ENCODE measurements at regions of chr9 and their contacts with region 1.

Region 1: GRCh38 chr9:121984726-121985402 is 108.2 kb downstream of the TTLL11 start:
- DNase-seq: no peak
- H3K4me3 ChIP-seq: no peak overlapping the region
- H3K27ac ChIP-seq: no peak overlapping the region
- H3K4me1 ChIP-seq: no peaks in the 10 kb centered on the region
- H3K27me3 ChIP-seq: no peaks in the 10 kb centered on the region
- CTCF ChIP-seq: no peak

Region 2: DNA sequence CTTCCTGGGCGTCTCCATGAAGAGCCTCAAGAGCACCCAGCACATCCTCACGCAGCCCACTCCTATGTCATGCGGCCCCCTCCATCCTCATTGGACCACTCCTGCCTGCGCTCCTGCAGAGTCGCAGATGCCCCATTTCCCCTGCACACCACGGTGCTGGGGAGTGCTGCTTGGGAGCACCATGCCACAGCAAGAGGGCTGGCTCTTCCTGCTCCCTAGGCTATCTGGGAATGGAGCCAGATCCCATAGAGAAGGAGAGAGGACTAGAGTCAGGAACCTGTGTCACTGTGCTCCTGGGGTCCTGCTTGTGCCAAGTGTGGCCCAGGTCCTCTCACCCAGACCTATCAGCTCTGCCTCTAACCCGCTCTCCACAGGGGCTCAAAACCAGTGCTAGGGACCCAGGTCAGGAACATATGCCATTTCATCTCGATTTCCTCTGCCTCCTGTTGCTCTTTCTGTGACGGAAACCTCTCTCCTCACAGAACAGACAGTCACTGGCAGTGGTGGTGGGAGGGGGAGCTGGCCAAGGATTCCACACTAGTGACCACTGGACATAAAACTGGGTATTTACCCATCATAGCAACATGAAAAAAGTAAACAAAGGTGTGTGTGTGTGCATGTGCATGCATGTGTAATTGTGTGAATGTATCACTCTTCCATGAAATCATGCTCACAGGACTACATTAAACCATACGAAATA is 70.1 kb before region 1 on chr9:
- intact Hi-C with region 1: loop called (anchors 5 kb)
- DNase-seq: peak; percentile 29
- H3K4me3 ChIP-seq: no peak overlapping the region
- H3K27ac ChIP-seq: peak overlapping the region; percentile 60
- H3K4me1 ChIP-seq: no peaks in the 10 kb centered on the region
- H3K27me3 ChIP-seq: no peaks in the 10 kb centered on the region
- CTCF ChIP-seq: no peak

Region 3: DNA sequence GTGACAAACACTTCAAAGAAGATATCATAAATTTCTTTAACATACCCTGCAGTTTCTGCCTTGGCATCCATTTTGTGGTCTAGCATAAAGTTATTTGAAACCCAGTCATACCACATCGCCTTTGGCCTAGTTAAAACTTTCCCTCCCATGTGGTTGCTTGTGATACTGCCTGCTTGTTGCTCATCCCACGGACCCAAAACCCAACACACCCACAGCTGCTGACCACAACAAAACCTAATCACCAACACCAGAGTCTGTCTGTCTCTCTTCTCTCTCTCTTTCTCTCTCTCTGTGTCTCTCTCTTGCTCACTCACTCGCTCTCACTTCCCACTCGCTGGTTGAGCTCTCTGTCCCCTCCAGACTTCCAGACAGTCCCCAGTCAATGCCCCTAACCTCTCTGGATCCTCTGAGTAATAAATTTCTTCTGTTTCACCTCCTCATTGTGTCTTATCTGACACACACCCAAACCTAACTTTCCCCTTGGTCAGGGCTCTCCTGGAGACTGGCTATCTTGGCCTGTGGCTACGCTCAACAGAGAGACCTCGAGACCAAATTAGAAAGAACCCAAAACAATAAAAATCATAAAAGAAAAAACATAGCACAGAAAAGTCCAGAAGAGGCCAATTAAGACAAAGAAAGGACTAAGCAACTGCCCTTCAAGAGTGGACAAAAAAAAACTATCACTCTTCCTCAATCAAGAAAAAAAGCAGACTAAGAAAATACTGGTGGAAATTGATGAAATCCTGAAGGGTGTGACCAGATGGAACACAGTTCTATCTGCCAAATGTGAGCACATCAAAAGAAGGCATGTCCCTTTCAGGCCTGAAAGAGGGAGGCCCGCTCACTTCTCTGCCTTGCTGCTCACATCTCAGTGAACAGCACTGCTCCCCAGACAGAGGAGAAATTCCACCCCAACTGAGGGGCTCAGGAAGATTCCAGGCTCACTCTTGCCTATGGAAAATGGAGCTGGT is 66.8 kb after region 1 on chr9:
- intact Hi-C with region 1: no loop called
- DNase-seq: no peak
- H3K4me3 ChIP-seq: no peak overlapping the region
- H3K27ac ChIP-seq: no peak overlapping the region
- H3K4me1 ChIP-seq: no peaks in the 10 kb centered on the region
- H3K27me3 ChIP-seq: no peaks in the 10 kb centered on the region
- CTCF ChIP-seq: no peak

Region 4: DNA sequence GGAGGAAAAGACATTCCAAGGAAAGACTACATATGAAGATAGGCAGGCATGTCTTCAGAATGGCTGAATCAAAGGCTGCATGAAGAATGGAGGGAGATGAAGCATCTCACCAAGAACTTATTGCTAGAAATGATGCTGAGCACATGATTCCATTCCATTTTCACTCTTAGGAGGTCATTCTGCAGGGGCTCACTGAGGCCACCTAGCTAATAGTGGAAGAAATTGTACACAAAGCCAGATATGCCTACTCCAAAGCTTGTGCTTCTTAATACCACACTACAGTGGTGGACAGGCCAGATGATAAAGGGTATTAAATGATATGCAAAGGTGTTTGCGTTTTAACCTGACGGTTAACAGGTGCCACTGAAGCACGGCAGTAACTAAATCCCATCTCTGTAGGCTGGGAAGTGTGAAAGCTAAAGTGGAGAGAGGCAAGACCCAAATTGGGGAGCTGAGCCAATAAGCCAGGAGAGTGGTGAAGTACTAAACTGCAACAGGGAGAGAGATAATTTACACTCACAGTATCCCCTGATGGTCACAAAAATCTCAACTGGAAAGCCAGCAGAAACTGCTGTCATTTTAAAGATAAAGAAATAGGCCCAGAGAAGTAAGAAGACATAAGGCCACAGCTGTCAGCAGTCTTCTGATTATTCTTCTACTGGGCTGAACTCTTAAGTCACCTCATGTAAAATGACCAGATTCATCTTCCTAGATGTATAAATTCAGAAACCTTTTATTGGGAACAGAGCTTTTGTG is 160.2 kb after region 1 on chr9:
- intact Hi-C with region 1: no loop called
- DNase-seq: no peak
- H3K4me3 ChIP-seq: no peak overlapping the region
- H3K27ac ChIP-seq: no peak overlapping the region
- H3K4me1 ChIP-seq: no peaks in the 10 kb centered on the region
- H3K27me3 ChIP-seq: no peaks in the 10 kb centered on the region
- CTCF ChIP-seq: no peak

Measured in colonic mucosa (tissue), 4 donors.